IMR-90 (cell line): ENCODE measurements at regions of chr5 and their contacts with region 1.

Region 1: GRCh38 chr5:134692722-134693121 is 44.1 kb downstream of the SEC24A start:
- DNase-seq: no peak
- ATAC-seq: no peak
- H3K4me3 ChIP-seq: no peak overlapping the region
- H3K27ac ChIP-seq: no peak overlapping the region
- H3K4me1 ChIP-seq: no peaks in the 10 kb centered on the region
- H3K27me3 ChIP-seq: no peaks in the 10 kb centered on the region
- CTCF ChIP-seq: no peak
- POLR2A ChIP-seq: no peak
- RAD21 ChIP-seq: no peak

Region 2: DNA sequence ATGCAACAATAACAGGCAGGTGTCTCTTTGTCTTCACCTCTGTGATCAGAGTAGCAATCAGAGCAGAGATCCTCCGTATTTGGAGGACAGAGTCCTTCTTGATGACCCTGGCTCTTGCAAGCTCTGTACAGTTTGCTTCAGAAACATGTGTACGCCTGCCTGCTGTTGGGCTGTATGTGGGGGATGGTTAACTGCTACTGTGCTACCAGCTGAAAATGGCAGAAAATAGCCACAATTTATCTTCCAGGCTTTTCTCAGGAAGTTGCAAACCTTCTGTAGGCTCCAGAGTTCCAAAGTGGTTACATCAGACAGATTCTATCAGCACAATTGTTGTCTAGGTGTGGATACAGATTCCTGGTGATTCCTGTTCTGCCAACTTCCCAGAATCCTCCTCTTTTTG is 101.4 kb after region 1 on chr5:
- CTCF ChIA-PET with region 1: no interaction called
- POLR2A ChIA-PET with region 1: no interaction called
- dilution Hi-C with region 1: no loop called
- in situ Hi-C with region 1: no loop called
- intact Hi-C with region 1: loop called (anchors 10 kb)
- DNase-seq: peak; percentile 16
- ATAC-seq: no peak; the same call in 1 of the 2 replicates
- H3K4me3 ChIP-seq: no peak overlapping the region
- H3K27ac ChIP-seq: no peak overlapping the region
- H3K4me1 ChIP-seq: peaks cover 2% of the 10 kb centered on the region; the same call in 1 of the 2 replicates
- H3K27me3 ChIP-seq: no peaks in the 10 kb centered on the region
- CTCF ChIP-seq: no peak
- POLR2A ChIP-seq: no peak
- RAD21 ChIP-seq: no peak